Prostate gland (tissue), 2 donors: ENCODE measurements at regions of chr3 and their contacts with region 1.

Region 1: GRCh38 chr3:179562591-179563270 is at the start of gene ACTL6A:
- DNase-seq: peak; percentile 100
- H3K4me3 ChIP-seq: peak within 1 kb of the TSS; percentile 71 to 87
- H3K27ac ChIP-seq: peak within 1 kb of the TSS; percentile 82 to 89
- H3K4me1 ChIP-seq: no peaks in the 10 kb centered on the region
- H3K27me3 ChIP-seq: no peaks in the 10 kb centered on the region
- CTCF ChIP-seq: no peak
- POLR2A ChIP-seq: peak; percentile 46
- total RNA-seq, gene ACTL6A: 35.6 to 73.6 TPM

Region 2: GRCh38 chr3:178960181-178960580 is 602.5 kb before region 1 on chr3:
- intact Hi-C with region 1: no loop called
- DNase-seq: no peak
- H3K4me3 ChIP-seq: no peak overlapping the region
- H3K27ac ChIP-seq: no peak overlapping the region
- H3K4me1 ChIP-seq: no peaks in the 10 kb centered on the region
- H3K27me3 ChIP-seq: no peaks in the 10 kb centered on the region
- CTCF ChIP-seq: no peak
- POLR2A ChIP-seq: no peak

Region 3: GRCh38 chr3:179421500-179421899 is 141.2 kb before region 1 on chr3:
- intact Hi-C with region 1: loop called (anchors 5 kb)
- DNase-seq: no peak
- H3K4me3 ChIP-seq: no peak overlapping the region
- H3K27ac ChIP-seq: no peak overlapping the region
- H3K4me1 ChIP-seq: no peaks in the 10 kb centered on the region
- H3K27me3 ChIP-seq: no peaks in the 10 kb centered on the region
- CTCF ChIP-seq: peak in 1 of 4 experiments; percentile 15
- POLR2A ChIP-seq: no peak

Region 4: DNA sequence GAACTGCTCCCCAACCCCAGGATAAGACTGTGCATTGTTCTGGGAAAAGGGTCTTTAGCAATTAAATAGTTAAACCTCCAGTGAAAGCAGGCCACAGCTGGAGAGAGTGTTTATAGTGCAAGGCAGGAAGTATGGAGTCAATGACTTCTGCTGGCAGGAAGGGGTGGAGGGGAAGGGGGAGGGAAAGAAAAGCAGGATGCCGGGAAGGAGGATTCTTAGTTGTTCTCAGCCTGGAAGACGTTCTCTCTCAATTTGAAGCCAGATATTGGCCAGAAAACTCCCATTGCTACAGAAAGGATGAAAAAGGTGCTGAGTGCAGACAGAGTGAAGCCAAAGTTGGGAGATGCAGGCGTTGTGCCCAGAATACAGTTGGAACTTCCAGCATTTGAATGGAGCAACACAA is 35.7 kb before region 1 on chr3:
- intact Hi-C with region 1: no loop called
- DNase-seq: no peak
- H3K4me3 ChIP-seq: no peak overlapping the region
- H3K27ac ChIP-seq: no peak overlapping the region
- H3K4me1 ChIP-seq: no peaks in the 10 kb centered on the region
- H3K27me3 ChIP-seq: no peaks in the 10 kb centered on the region
- CTCF ChIP-seq: no peak
- POLR2A ChIP-seq: no peak

Region 5: GRCh38 chr3:179604321-179605078 is 41.8 kb after region 1 on chr3 and contains the starts of genes MRPL47 and NDUFB5:
- intact Hi-C with region 1: loop called (anchors 5 kb)
- DNase-seq: peak; percentile 96
- H3K4me3 ChIP-seq: peak within 1 kb of the TSS; percentile 47 to 58
- H3K27ac ChIP-seq: peak within 1 kb of the TSS; percentile 81 to 83
- H3K4me1 ChIP-seq: no peaks in the 10 kb centered on the region
- H3K27me3 ChIP-seq: no peaks in the 10 kb centered on the region
- CTCF ChIP-seq: no peak
- POLR2A ChIP-seq: peak; percentile 56
- total RNA-seq, gene MRPL47: 19.8 to 40.2 TPM
- total RNA-seq, gene NDUFB5: 75.9 to 122 TPM